ENCODE measurements at regions of chr18 and their contacts with region 1.

Region 1: GRCh38 chr18:70491734-70492348 is 203.0 kb downstream of the SOCS6 start:
- DNase-seq: peak; percentile 73
- ATAC-seq: peak; percentile 55
- H3K4me3 Mint-ChIP-seq: no peak overlapping the region
- H3K27ac Mint-ChIP-seq: no peak overlapping the region
- H3K4me1 Mint-ChIP-seq: peaks cover 6% of the 10 kb centered on the region
- H3K27me3 Mint-ChIP-seq: peaks cover 3% of the 10 kb centered on the region
- CTCF ChIP-seq: peak; percentile 81

Region 2: GRCh38 chr18:70221156-70221914 is 270.5 kb before region 1 on chr18:
- CTCF ChIA-PET with region 1: no interaction called
- POLR2A ChIA-PET with region 1: no interaction called
- intact Hi-C with region 1: no loop called
- DNase-seq: no peak
- ATAC-seq: no peak
- H3K4me3 Mint-ChIP-seq: no peak overlapping the region
- H3K27ac Mint-ChIP-seq: no peak overlapping the region
- H3K4me1 Mint-ChIP-seq: no peaks in the 10 kb centered on the region
- H3K27me3 Mint-ChIP-seq: peaks cover 27% of the 10 kb centered on the region
- CTCF ChIP-seq: no peak

Region 3: GRCh38 chr18:70507970-70508369 is 16.1 kb after region 1 on chr18:
- CTCF ChIA-PET with region 1: interaction called, 20 read pairs
- POLR2A ChIA-PET with region 1: no interaction called
- intact Hi-C with region 1: no loop called
- DNase-seq: no peak
- ATAC-seq: no peak
- H3K4me3 Mint-ChIP-seq: no peak overlapping the region
- H3K27ac Mint-ChIP-seq: no peak overlapping the region
- H3K4me1 Mint-ChIP-seq: no peaks in the 10 kb centered on the region
- H3K27me3 Mint-ChIP-seq: no peaks in the 10 kb centered on the region
- CTCF ChIP-seq: no peak

Measured in activated CD8-positive, alpha-beta T cell treated with anti-CD3 and anti-CD28 coated beads for 36 hours (primary cell).